ENCODE measurements at regions of chr20 and their contacts with region 1.

Region 1: DNA sequence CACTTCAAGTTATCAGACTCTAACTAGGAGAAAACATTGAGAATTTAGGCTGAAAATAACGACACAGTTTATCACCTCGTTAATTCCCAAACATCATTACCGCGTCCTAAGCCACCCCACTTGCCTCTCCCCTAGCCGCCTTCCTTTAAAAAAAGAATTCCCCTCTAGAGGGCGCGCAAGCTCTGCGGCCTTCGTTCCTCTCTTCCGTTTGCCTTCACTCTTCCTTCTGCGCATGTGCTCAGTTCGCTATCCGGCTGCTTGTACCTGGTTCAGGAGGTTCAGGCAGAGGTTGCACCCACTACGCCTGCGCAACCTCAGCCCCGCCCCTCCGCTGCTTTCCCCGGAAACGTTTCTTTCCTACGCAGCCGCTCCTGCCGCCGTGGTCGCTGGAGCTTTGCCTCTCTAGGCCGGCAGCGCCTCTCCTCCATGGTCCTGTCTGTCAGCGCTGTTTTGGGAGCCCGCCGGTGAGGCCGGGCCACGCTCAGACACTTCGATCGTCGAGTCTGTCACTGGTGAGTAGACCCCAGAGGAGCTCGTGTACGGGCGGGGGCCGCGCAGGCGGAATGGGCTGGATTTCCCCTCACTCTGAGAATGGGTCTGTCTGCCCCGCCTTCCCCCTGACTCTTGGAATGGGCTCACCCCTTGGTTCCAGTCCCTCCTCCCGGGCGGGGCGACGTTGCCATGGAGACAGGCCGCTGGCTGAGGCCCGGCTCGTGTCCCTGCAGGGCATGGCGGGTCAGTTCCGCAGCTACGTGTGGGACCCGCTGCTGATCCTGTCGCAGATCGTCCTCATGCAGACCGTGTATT is at the start of gene SYS1:
- DNase-seq: peak; percentile 96
- CTCF ChIP-seq: peak; percentile 74

Region 2: GRCh38 chr20:44997171-44998067 is 365.6 kb before region 1 on chr20:
- CTCF ChIA-PET with region 1: no interaction called
- POLR2A ChIA-PET with region 1: no interaction called
- DNase-seq: no peak
- CTCF ChIP-seq: no peak

Region 3: GRCh38 chr20:45347936-45348778 is 14.8 kb before region 1 on chr20 and contains the start of gene SDC4:
- CTCF ChIA-PET with region 1: interaction called, 18 read pairs
- POLR2A ChIA-PET with region 1: no interaction called
- DNase-seq: peak; percentile 43
- CTCF ChIP-seq: no peak

Region 4: DNA sequence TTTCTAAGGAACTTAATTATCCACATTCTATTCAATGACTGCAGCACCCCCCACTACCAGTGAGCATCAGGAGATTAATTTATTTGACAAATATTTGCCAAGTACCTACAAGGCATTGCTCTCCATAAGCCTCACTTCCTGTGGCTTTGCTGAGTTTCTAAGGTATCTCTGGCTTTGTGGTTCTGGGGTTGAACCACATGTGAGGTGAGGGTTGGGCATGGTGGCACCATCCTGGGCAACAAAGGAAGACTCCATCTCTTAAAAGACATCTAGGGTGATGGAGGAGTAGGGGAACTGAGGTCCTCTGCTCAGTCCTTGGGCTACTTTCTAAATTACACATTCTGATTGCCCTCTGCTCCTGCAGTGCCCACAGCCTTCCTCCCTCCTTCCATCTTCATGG is 81.0 kb after region 1 on chr20:
- CTCF ChIA-PET with region 1: interaction called, 488 read pairs
- POLR2A ChIA-PET with region 1: interaction called, 4 read pairs
- DNase-seq: no peak
- CTCF ChIP-seq: no peak

Measured in GM10248 (cell line).